ENCODE measurements at regions of chr15 and their contacts with region 1.

Region 1: DNA sequence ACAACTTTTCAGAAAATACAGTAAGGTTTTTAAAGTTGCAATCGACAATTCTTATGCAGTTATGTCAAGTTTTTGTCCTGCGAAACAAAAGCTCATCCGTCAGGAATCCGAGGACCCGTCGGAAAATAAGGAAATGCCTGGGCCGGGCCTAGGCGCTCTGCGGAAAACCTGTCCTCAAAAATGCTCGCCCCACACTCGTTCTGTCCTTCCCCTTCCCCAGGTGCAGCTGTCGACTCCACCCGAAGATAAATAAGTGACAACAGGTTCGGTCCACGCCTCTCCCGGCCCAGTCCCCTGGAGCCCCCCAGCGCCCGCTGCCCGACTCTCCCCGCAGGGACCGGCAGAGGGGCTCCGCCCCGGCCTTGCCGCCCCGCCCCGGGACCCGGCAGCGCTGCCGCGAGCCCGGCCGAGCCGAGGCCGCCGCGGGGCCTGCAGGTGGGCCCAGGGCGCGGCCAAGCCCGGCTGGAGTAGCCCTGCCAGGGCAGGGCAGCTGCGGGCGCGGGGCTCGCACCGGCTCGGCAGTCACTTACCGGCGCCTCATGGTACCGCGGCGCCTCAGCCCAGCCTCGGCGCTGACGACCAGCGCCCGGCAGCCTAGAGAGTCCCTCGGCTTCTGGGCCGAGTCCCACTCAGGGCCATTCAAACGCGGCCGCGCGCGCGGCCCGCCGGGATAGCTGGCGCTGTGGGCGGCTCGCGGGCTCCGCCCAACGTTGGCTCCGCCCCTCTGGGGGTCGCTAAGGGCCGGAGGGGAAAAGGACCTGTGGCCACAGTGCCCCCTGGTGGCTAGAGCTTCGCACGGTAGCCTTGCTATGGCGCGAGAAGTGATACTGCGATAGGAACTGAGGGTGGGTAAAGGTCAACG is at the start of gene KATNBL1:
- DNase-seq: peak; percentile 93 to 97
- H3K4me3 ChIP-seq: peak within 1 kb of the TSS; percentile 71 to 72
- H3K27ac ChIP-seq: peak within 1 kb of the TSS; percentile 75 to 80
- H3K4me1 ChIP-seq: peaks cover 0 to 16% (median 8%) of the 10 kb centered on the region in 4 donors
- H3K27me3 ChIP-seq: no peaks in the 10 kb centered on the region
- CTCF ChIP-seq: peak; percentile 90

Region 2: DNA sequence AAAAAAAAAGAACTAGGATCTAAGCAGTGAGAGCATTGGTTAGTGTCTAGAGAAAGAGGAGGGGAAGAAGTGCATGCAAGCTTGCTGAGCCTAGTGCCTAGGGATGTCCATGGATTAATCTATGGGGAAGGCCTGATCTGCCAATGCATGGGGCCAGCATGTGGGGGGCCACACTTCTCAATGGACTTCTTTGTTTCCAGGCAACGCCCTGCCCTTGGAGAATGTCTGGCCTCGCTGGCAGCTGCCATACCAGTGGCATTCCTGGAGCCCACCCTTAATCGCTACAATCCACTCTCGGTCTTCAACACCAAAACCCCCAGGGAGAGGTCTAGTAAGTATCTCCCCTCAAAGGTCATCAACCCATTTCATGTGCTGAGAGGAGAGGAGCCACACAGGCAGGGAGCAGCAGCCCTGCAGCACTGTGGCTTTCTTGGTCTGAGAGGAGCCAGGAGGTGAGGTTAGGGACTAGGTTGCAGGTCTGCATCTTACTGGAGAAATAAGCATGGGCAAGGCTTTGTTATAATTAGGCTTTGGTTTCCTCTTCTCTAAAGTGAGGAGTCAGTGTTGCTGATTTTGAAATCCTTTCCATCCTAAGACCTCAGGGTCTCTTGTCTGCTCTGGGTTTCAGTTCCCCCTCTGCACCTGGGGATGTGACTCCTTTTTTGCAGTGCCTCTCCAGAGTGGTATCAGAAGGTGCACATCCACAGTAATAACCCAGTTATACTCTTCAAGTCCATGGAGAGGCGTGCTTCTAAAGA is 429.5 kb before region 1 on chr15:
- intact Hi-C with region 1: no loop called
- DNase-seq: no peak
- H3K4me3 ChIP-seq: no peak overlapping the region
- H3K27ac ChIP-seq: no peak overlapping the region
- H3K4me1 ChIP-seq: no peaks in the 10 kb centered on the region
- H3K27me3 ChIP-seq: no peaks in the 10 kb centered on the region
- CTCF ChIP-seq: no peak

Region 3: GRCh38 chr15:34065941-34066340 is 143.7 kb before region 1 on chr15:
- intact Hi-C with region 1: loop called (anchors 5 kb)
- DNase-seq: no peak
- H3K4me3 ChIP-seq: no peak overlapping the region
- H3K27ac ChIP-seq: no peak overlapping the region
- H3K4me1 ChIP-seq: no peaks in the 10 kb centered on the region
- H3K27me3 ChIP-seq: no peaks in the 10 kb centered on the region
- CTCF ChIP-seq: no peak

Measured in tibial artery (tissue), 4 donors.